Colonic mucosa (tissue), 4 donors: ENCODE measurements at regions of chr15 and their contacts with region 1.

Region 1: DNA sequence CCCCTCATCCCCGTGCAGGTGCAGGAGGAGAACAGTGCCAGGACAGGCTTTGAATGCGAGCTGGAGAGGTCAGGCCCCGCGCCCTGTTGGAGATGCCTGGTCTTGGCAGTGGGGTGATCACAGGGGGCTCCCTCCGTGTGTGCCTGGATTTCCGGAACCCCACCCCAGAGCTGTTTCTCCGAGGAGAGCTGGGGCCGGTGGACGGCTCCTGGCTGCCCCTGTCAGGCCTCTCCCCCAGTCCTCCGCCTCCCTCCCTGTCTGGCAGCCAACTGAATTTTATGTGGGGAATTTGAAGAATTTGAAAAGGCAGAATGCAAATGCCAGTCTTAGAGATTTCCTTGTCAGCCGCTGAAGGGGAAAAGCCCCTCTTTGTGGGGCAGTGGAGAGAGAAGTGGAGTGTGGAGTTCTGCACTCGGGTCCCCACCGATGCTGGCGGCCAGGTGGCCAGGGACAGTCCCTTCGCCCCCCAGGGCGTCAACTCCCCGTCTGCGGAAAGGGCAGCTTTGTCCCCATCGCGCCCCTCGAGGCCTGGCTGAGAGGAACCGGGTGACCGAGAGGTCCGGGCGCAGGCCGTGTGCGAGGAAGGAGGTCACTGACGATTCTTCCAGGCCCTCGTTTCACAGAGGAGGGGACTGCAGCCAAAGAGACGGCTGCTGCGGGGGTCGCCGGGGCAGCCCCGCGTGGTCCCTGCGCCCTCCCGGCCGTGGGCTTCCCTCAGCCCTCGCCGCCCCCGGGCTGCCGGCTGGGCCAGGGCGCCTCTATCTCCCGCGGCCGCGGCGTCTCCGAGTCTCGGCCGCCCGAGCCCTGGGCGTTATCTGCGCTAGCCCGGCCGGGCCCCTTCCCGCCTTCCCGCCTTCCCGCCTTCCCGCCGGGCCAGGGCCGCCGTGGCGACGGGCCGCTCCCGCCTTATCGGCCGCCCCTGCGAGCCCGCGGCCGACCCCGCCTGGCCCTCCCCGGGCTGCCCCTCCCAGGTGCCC is 56.0 kb upstream of the LCTL start:
- DNase-seq: peak; percentile 32
- H3K4me3 ChIP-seq: no peak overlapping the region
- H3K27ac ChIP-seq: no peak overlapping the region
- H3K4me1 ChIP-seq: peaks cover 23% of the 10 kb centered on the region
- H3K27me3 ChIP-seq: no peaks in the 10 kb centered on the region
- CTCF ChIP-seq: no peak

Region 2: DNA sequence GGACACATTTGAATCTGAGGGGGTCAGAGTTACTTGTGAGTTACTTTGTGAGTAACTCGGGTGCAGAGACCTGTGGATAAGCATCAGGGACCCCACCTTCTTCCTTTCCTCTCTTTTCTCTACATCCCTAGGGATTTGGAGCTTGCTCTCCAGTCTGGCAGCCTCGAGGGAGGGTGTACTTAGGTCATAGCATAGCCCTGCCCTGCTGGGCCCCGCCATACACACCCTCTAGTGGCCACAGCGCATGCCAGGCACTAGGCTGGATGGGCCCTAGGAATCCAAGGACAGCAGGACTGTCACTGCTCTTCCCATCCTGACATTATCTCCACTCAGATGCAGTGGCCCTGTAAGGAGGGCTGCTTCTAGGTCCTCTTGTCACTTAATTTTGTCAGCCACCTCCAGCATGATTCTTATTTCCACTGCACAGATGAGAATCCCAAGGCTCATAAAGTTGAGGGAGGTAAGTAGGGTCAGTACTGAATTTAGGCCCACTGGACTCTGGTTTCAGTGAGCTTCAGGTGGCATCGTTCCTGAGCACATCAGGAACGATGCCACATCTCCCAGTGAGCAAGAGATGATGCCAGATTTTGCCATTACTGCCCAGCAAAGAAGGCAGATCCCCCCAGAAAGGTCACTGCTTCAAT is 76.7 kb after region 1 on chr15:
- intact Hi-C with region 1: loop called (anchors 2 kb)
- DNase-seq: peak; percentile 75
- H3K4me3 ChIP-seq: no peak overlapping the region
- H3K27ac ChIP-seq: no peak overlapping the region
- H3K4me1 ChIP-seq: no peaks in the 10 kb centered on the region
- H3K27me3 ChIP-seq: no peaks in the 10 kb centered on the region
- CTCF ChIP-seq: peak; percentile 67

Region 3: GRCh38 chr15:66773129-66773873 is 151.5 kb after region 1 on chr15:
- intact Hi-C with region 1: loop called (anchors 2 kb)
- DNase-seq: peak; percentile 68
- H3K4me3 ChIP-seq: no peak overlapping the region
- H3K27ac ChIP-seq: peak overlapping the region; percentile 52
- H3K4me1 ChIP-seq: peaks cover 19% of the 10 kb centered on the region
- H3K27me3 ChIP-seq: no peaks in the 10 kb centered on the region
- CTCF ChIP-seq: no peak

Region 4: GRCh38 chr15:66789029-66790025 is 167.5 kb after region 1 on chr15:
- intact Hi-C with region 1: no loop called
- DNase-seq: no peak
- H3K4me3 ChIP-seq: no peak overlapping the region
- H3K27ac ChIP-seq: no peak overlapping the region
- H3K4me1 ChIP-seq: no peaks in the 10 kb centered on the region
- H3K27me3 ChIP-seq: no peaks in the 10 kb centered on the region
- CTCF ChIP-seq: no peak

Region 5: DNA sequence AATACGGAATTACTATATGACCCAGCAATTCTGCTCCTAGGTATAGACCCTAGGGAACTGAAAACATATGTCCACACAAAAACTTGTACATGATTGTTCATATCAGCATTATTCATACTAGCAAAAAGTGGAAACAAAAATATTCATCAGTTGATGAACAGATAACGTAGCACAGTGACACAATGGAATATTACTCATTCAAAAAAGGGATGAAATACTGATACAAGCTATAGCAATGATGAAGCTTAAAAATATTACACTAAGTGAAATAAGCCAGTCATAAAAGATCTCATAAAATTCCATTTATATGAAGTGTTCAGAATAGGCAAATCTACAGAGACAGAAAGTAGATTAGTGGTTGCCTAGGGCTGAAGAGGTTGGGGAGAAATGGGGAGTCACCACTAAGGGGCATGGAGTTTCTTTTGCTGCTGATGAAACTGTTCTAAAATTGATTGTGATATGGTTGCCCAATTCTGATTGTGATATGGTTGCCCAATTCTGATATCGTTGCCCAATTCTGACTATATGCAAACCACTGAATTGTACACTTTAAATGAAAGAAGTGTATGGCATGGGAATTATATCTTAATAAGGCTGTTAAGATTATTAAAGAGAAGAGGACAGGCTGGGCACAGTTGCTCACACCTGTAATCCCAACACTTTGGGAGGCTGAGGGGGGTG is 909.7 kb after region 1 on chr15:
- intact Hi-C with region 1: no loop called
- DNase-seq: no peak
- H3K4me3 ChIP-seq: no peak overlapping the region
- H3K27ac ChIP-seq: no peak overlapping the region
- H3K4me1 ChIP-seq: no peaks in the 10 kb centered on the region
- H3K27me3 ChIP-seq: no peaks in the 10 kb centered on the region
- CTCF ChIP-seq: no peak